ENCODE measurements at regions of chr3 and their contacts with region 1.

Region 1: GRCh38 chr3:7508821-7509220 is 647.9 kb downstream of the GRM7 start:
- DNase-seq: no peak
- H3K4me3 ChIP-seq: no peak overlapping the region
- H3K27ac ChIP-seq: no peak overlapping the region
- H3K4me1 ChIP-seq: no peaks in the 10 kb centered on the region
- H3K27me3 ChIP-seq: no peaks in the 10 kb centered on the region
- CTCF ChIP-seq: no peak
- EP300 ChIP-seq: no peak
- POLR2A ChIP-seq: no peak

Region 2: DNA sequence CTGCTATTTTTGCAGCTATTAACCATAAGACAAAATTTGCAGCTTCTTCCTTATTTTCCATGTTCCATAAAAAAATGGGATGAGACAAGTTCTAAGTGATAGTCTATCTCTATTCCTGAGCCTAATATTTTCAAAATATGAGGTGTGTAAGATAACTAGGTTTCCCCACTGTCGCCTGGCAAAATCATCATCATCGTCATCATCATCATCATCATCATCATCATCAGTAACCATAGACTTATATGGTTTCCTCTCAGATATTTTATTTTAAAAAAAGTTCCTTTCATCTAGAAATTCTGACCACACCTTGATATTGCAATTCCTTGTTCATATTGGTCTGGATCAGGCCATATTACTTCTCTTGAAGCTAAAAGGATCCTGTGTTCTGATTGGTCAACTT is 374.6 kb before region 1 on chr3:
- in situ Hi-C with region 1: no loop called
- intact Hi-C with region 1: no loop called
- DNase-seq: no peak
- H3K4me3 ChIP-seq: no peak overlapping the region
- H3K27ac ChIP-seq: no peak overlapping the region
- H3K4me1 ChIP-seq: no peaks in the 10 kb centered on the region
- H3K27me3 ChIP-seq: no peaks in the 10 kb centered on the region
- CTCF ChIP-seq: no peak
- EP300 ChIP-seq: no peak
- POLR2A ChIP-seq: no peak

Region 3: GRCh38 chr3:7469866-7470265 is 39.0 kb before region 1 on chr3:
- in situ Hi-C with region 1: no loop called
- intact Hi-C with region 1: loop called (anchors 2 kb)
- DNase-seq: no peak
- H3K4me3 ChIP-seq: no peak overlapping the region
- H3K27ac ChIP-seq: no peak overlapping the region
- H3K4me1 ChIP-seq: no peaks in the 10 kb centered on the region
- H3K27me3 ChIP-seq: no peaks in the 10 kb centered on the region
- CTCF ChIP-seq: no peak
- EP300 ChIP-seq: no peak
- POLR2A ChIP-seq: no peak

Region 4: DNA sequence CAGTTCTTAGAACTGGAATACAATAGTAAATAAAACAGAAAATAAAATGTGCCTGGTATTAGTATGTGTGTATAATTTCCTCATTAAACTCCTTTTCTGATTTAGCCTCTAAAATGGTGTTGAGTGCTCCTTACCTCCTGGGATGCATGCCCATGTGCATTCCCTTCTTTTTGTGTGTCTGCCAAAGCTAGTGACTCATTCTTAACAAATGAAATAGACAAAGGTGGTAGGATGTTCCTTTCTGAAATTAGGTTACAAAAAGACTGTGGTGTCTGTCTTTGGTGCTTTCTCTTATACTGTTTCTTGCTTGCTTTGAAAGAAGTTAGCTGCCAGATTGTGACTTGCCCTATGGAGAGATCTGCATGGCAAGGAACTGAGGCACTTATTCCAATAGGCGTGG is 24.2 kb before region 1 on chr3:
- in situ Hi-C with region 1: no loop called
- intact Hi-C with region 1: loop called (anchors 1 kb)
- DNase-seq: no peak
- H3K4me3 ChIP-seq: no peak overlapping the region
- H3K27ac ChIP-seq: no peak overlapping the region
- H3K4me1 ChIP-seq: no peaks in the 10 kb centered on the region
- H3K27me3 ChIP-seq: no peaks in the 10 kb centered on the region
- CTCF ChIP-seq: no peak
- EP300 ChIP-seq: no peak
- POLR2A ChIP-seq: no peak

Region 5: DNA sequence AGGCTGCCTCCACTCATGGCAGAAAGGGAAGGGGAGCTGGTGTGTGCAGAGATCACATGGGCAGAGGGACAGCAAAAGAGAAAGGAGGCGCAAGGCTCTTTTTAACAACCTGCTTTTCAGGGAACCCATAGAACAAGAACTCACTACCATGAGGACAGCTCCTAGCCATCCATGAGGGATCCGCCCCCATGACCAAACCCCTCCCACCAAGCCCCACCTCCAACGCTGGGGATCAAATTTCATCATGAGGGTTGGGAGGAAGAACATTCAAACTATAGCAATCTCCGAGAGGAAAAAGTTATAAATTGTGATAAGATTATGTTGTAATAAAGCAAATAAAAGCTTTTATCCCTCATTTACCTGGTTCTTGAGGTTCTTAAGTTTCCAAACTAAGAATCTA is 908.1 kb after region 1 on chr3:
- in situ Hi-C with region 1: no loop called
- intact Hi-C with region 1: no loop called
- DNase-seq: peak; percentile 37
- H3K4me3 ChIP-seq: peak overlapping the region in 2 of 4 donors; percentile 5 to 23
- H3K27ac ChIP-seq: no peak overlapping the region
- H3K4me1 ChIP-seq: peaks cover 0 to 4% (median 0%) of the 10 kb centered on the region in 4 donors
- H3K27me3 ChIP-seq: no peaks in the 10 kb centered on the region
- CTCF ChIP-seq: no peak
- EP300 ChIP-seq: no peak
- POLR2A ChIP-seq: no peak